ENCODE measurements at regions of chr13 and their contacts with region 1.

Region 1: DNA sequence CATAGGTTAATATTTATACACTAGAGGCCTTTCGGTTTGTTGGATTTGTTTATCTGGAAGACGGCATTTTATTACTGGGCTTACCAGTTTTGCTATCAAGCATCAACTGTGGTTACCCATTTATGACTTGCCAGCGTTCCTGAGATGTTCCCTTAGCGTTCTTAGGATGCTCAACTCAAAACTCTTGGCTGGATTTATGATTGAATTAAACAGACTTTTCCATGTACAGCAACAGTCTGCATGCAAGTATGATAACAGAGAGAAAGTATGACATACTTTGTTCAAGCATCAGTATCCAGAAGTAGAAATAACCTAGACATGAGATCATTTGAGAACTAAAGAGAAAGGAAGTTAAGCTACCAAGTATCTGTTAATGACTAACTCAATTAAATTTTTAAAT is 29.9 kb upstream of the RNF113B start:
- DNase-seq: peak in 1 of 2 experiments; percentile 48
- H3K4me3 ChIP-seq: no peak overlapping the region
- H3K27ac ChIP-seq: peak overlapping the region; percentile 20
- H3K4me1 ChIP-seq: peaks cover 15% of the 10 kb centered on the region
- H3K27me3 ChIP-seq: no peaks in the 10 kb centered on the region
- CTCF ChIP-seq: no peak

Region 2: GRCh38 chr13:98586400-98587345 is 379.7 kb after region 1 on chr13:
- CTCF ChIA-PET with region 1: no interaction called
- POLR2A ChIA-PET with region 1: interaction called, 16 read pairs
- intact Hi-C with region 1: no loop called
- DNase-seq: peak in 1 of 2 experiments; percentile 72
- H3K4me3 ChIP-seq: no peak overlapping the region
- H3K27ac ChIP-seq: 0 out of 2 replicates have a peak overlapping the region, but pooled peaks have one; percentile 1
- H3K4me1 ChIP-seq: peaks cover 39% of the 10 kb centered on the region
- H3K27me3 ChIP-seq: no peaks in the 10 kb centered on the region
- CTCF ChIP-seq: no peak

Measured in PC-9 (cell line).